Calu3 (cell line): ENCODE measurements at regions of chr16 and their contacts with region 1.

Region 1: DNA sequence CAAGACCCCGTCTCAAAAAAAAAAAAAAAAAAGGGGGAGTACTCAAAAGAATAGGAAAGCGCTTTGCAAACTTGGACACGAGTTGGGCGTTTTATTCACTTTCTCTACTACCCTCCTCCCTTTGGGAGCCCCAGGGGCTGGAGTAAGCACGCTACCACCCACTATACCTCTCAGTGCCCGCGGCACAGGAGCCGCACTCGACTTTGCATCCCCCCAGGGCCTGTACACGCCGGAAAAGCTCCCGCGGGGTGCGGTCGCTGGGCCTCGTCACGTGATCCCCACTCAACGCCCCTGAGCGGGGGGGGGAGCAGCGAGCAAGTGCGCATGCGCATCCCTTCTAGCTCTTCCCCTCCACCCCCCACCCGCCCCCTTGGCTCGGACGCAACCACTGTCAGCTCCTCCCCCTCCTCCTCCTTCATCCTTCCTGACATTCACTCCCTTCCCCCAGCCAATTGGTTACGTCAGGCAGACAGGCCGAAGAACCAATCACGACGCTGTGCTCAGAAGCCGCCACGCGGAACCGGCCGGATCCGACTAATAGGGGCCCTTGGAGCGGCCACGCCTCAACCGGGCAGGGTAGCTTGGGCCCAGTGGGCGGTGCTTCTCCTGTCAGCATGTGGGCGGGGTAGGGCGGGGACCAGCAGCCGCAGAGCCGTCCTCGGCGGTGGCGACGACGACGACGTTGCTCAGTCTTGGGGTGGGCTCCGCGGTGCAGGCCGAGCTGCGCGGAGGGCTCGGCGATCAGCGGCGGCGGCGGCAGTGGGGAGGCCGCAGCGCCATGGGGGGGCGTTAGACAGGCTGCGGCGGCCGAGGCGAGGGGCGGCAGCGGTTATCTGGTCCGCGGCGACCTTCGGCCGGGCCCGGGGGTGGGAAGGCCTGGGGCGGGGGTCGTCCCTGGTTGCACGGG is at the start of gene HAPSTR1:
- DNase-seq: peak; percentile 99
- H3K4me3 Mint-ChIP-seq: peak within 1 kb of the TSS; percentile 80
- H3K27ac Mint-ChIP-seq: peak within 1 kb of the TSS; percentile 95
- H3K4me1 Mint-ChIP-seq: peaks cover 31% of the 10 kb centered on the region
- H3K27me3 Mint-ChIP-seq: no peaks in the 10 kb centered on the region
- CTCF ChIP-seq: no peak
- total RNA-seq, gene HAPSTR1: 57.1 and 59.6 TPM in 2 replicates

Region 2: GRCh38 chr16:8963825-8964441 is 127.3 kb before region 1 on chr16 and contains the start of gene USP7:
- CTCF ChIA-PET with region 1: interaction called, 8 read pairs
- intact Hi-C with region 1: loop called (anchors 10 kb)
- DNase-seq: peak; percentile 97
- H3K4me3 Mint-ChIP-seq: peak within 1 kb of the TSS; percentile 99
- H3K27ac Mint-ChIP-seq: peak within 1 kb of the TSS; percentile 86
- H3K4me1 Mint-ChIP-seq: peaks cover 34% of the 10 kb centered on the region
- H3K27me3 Mint-ChIP-seq: no peaks in the 10 kb centered on the region
- CTCF ChIP-seq: no peak
- total RNA-seq, gene USP7: 126 and 165 TPM in 2 replicates